ENCODE measurements at regions of chrX and their contacts with region 1.

Region 1: GRCh38 chrX:151680805-151681204 is 14.5 kb upstream of the PRRG3 start:
- DNase-seq: peak; percentile 57
- H3K4me3 ChIP-seq: no peak overlapping the region
- H3K27ac ChIP-seq: no peak overlapping the region
- H3K4me1 ChIP-seq: no peaks in the 10 kb centered on the region
- H3K27me3 ChIP-seq: no peaks in the 10 kb centered on the region
- CTCF ChIP-seq: peak; percentile 43 to 60 (median 55)
- EP300 ChIP-seq: no peak
- POLR2A ChIP-seq: no peak

Region 2: GRCh38 chrX:150049647-150050046 is 1631.2 kb before region 1 on chrX:
- in situ Hi-C with region 1: no loop called
- intact Hi-C with region 1: loop called (anchors 5 kb)
- DNase-seq: no peak
- H3K4me3 ChIP-seq: no peak overlapping the region
- H3K27ac ChIP-seq: no peak overlapping the region
- H3K4me1 ChIP-seq: no peaks in the 10 kb centered on the region
- H3K27me3 ChIP-seq: no peaks in the 10 kb centered on the region
- CTCF ChIP-seq: no peak
- EP300 ChIP-seq: no peak
- POLR2A ChIP-seq: no peak

Region 3: GRCh38 chrX:151151665-151152267 is 529.0 kb before region 1 on chrX:
- in situ Hi-C with region 1: loop called (anchors 5 to 25 kb)
- intact Hi-C with region 1: loop called (anchors 5 kb)
- DNase-seq: peak; percentile 13
- H3K4me3 ChIP-seq: no peak overlapping the region
- H3K27ac ChIP-seq: no peak overlapping the region
- H3K4me1 ChIP-seq: no peaks in the 10 kb centered on the region
- H3K27me3 ChIP-seq: no peaks in the 10 kb centered on the region
- CTCF ChIP-seq: peak; percentile 49 to 72 (median 61)
- EP300 ChIP-seq: no peak
- POLR2A ChIP-seq: no peak

Region 4: DNA sequence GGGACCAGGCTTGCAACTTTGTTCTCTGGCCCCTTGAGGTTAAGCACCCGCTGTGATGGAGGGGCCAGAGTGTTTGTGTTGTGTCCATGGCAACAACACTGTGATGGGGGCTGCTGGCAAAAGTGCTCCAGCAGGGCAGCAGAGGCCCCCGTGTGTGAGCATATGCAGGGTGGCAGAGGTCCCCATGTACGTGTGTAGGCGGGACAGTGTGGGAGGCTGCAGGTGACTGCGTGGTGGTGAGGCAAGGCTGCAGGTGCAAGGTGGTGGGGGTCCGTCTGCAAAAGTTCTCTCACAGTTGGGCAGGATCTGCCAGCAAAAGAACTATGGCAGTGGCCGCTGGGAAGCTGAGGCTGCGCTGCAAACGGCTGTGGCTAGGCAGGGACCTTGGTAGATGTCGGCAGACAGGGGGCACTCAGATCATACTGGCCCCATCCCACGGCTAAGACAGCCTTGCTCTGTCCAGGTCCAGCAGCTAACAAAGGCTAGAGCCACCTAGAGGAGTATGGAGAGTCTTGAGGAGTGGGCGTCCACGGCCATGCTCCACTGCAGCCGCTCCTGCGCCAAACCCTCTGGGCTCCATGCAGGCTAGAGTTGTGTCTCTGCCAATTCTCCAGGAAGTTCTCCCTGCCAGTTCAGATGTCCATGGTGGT is 164.1 kb before region 1 on chrX:
- in situ Hi-C with region 1: no loop called
- intact Hi-C with region 1: no loop called
- DNase-seq: no peak
- H3K4me3 ChIP-seq: no peak overlapping the region
- H3K27ac ChIP-seq: no peak overlapping the region
- H3K4me1 ChIP-seq: no peaks in the 10 kb centered on the region
- H3K27me3 ChIP-seq: no peaks in the 10 kb centered on the region
- CTCF ChIP-seq: no peak
- EP300 ChIP-seq: no peak
- POLR2A ChIP-seq: no peak

Region 5: GRCh38 chrX:151789179-151789800 is 108.5 kb after region 1 on chrX:
- in situ Hi-C with region 1: no loop called
- intact Hi-C with region 1: no loop called
- DNase-seq: peak; percentile 18
- H3K4me3 ChIP-seq: no peak overlapping the region
- H3K27ac ChIP-seq: no peak overlapping the region
- H3K4me1 ChIP-seq: no peaks in the 10 kb centered on the region
- H3K27me3 ChIP-seq: no peaks in the 10 kb centered on the region
- CTCF ChIP-seq: no peak
- EP300 ChIP-seq: no peak
- POLR2A ChIP-seq: no peak

Measured in transverse colon (tissue), 4 donors.